ENCODE measurements at regions of chr12 and their contacts with region 1.

Region 1: GRCh38 chr12:48758221-48758620 is 30.7 kb downstream of the ADCY6 start:
- DNase-seq: no peak
- H3K4me3 Mint-ChIP-seq: no peak overlapping the region
- H3K27ac Mint-ChIP-seq: no peak overlapping the region
- H3K4me1 Mint-ChIP-seq: no peaks in the 10 kb centered on the region
- H3K27me3 Mint-ChIP-seq: peaks cover 3% of the 10 kb centered on the region

Region 2: DNA sequence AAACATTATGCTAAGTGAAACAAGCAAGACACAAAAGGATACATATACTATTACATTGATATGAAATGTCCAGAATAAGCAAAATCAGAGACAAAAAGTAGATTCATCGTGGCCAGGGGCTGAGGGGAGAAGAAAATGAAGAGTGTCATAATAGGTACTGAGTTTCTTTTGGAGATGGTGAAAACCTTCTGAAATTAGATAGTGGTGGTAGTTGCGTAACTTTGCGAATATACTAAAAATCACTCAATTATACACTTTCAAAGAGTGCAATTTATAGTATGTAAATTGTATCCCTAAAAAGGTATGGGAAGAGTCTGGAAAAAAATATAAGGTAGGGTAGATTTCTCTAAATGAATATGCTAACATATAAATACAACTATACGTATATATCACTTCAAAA is 98.4 kb before region 1 on chr12:
- intact Hi-C with region 1: no loop called
- DNase-seq: no peak
- H3K4me3 Mint-ChIP-seq: no peak overlapping the region
- H3K27ac Mint-ChIP-seq: no peak overlapping the region
- H3K4me1 Mint-ChIP-seq: peaks cover 9% of the 10 kb centered on the region
- H3K27me3 Mint-ChIP-seq: no peaks in the 10 kb centered on the region

Region 3: GRCh38 chr12:48716493-48717251 is 41.5 kb before region 1 on chr12 and contains the start of gene CCNT1:
- intact Hi-C with region 1: loop called (anchors 2 kb)
- DNase-seq: peak; percentile 99
- H3K4me3 Mint-ChIP-seq: peak within 1 kb of the TSS; percentile 92
- H3K27ac Mint-ChIP-seq: peak within 1 kb of the TSS; percentile 95
- H3K4me1 Mint-ChIP-seq: peaks cover 31% of the 10 kb centered on the region
- H3K27me3 Mint-ChIP-seq: no peaks in the 10 kb centered on the region
- total RNA-seq, gene CCNT1: 70.2 and 71.9 TPM in 2 replicates

Region 4: GRCh38 chr12:48795480-48796455 is 37.5 kb after region 1 on chr12:
- intact Hi-C with region 1: loop called (anchors 1 kb)
- DNase-seq: peak; percentile 27
- H3K4me3 Mint-ChIP-seq: no peak overlapping the region
- H3K27ac Mint-ChIP-seq: no peak overlapping the region
- H3K4me1 Mint-ChIP-seq: peaks cover 7% of the 10 kb centered on the region
- H3K27me3 Mint-ChIP-seq: peaks cover 8% of the 10 kb centered on the region

Measured in activated T-helper 2 cell treated with anti-CD3 and anti-CD28 coated beads, Interferon-gamma antibody, Interleukin-2, Interleukin-4, amounts not matched to agents 10 μg/mL and 5 μg/mL and 100 μg/mL, durations not matched to agents 14 hours and 24 hours and 36 hours (primary cell).